Gastrocnemius medialis (tissue), 4 donors: ENCODE measurements at regions of chr9 and their contacts with region 1.

Region 1: DNA sequence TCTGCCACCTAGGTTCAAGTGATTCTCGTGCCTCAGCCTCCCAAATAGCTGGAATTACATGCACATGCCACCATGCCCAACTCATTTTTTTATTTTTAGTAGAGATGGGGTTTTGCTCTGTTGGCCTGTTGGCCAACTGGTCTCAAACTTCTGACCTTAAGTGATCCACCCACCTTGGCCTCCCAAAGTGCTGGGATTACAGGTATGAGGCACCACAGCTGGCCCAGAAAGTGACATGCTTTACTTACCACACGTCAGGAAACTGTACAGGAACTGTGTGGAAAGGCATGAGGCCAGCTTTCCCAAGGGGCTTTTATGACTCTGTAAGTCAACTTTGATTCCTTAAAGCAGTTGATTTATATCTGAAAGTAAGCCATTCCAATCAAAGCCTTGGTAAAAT is 25.0 kb downstream of the DNAJB5 start:
- DNase-seq: no peak
- ATAC-seq: no peak
- H3K4me3 ChIP-seq: no peak overlapping the region
- H3K27ac ChIP-seq: peak overlapping the region in 3 of 4 donors; percentile 1 to 19 (median 12)
- H3K4me1 ChIP-seq: peaks cover 0 to 4% of the 10 kb centered on the region in 2 donors
- H3K27me3 ChIP-seq: no peaks in the 10 kb centered on the region
- CTCF ChIP-seq: no peak
- POLR2A ChIP-seq: no peak

Region 2: DNA sequence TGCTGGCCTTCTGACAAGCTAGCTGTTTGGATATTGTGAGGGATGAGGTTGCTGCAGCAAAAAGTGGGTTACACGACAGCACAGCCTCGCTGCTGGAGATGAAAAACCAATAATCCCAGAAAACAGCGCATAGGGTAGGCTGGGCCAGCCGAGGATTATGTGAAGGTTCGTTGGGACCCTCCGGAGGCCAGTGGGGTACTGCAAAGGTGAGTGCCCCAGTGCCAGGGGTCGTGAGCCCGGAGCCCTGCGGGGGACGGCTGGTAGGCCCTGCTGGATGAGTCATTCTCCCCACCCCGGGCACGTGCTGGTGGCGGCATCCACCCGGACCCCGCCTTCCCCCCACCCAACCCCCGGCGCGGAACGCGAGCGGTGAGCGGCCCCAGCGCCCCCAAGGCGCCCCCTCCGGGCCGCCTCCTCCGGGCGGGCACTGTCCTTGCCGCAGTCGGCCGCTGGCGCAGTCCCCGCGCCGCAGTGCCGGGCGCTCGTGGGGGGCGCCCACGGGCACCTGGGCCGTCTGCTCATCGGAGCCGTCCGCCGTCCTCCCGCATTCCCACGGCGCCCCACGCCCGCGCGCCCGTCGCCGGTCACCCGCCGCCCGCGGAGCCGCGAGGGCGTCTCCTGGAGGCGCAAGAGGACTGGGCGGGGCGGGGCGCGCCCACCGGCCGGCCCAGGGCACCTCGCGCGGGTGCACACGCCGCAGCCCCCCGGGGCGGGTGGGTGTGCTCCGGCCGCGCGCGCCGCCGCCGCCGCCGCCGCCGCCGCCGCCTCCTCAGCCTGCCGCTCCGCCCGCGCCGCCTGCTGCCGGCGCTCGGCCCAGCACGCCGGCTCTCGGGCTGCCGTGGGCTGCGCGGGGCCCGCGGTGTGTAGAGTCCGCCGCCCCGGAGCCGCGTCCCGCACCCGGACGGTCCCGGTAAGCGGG is 56.8 kb before region 1 on chr9 and contains the start of gene PHF24:
- in situ Hi-C with region 1: loop called in 1 of 4 experiments (anchors 10 kb)
- intact Hi-C with region 1: no loop called
- DNase-seq: no peak
- ATAC-seq: peak in 1 of 2 donors; percentile 49
- H3K4me3 ChIP-seq: peak within 1 kb of the TSS; percentile 17 to 46 (median 33)
- H3K27ac ChIP-seq: no peak within 1 kb of the TSS
- H3K4me1 ChIP-seq: no peaks in the 10 kb centered on the region
- H3K27me3 ChIP-seq: peaks cover 26 to 41% (median 31%) of the 10 kb centered on the region in 3 donors
- CTCF ChIP-seq: no peak
- POLR2A ChIP-seq: no peak
- total RNA-seq, gene PHF24: 0.04 TPM in 1 of 4 donors, not detected in the others

Region 3: DNA sequence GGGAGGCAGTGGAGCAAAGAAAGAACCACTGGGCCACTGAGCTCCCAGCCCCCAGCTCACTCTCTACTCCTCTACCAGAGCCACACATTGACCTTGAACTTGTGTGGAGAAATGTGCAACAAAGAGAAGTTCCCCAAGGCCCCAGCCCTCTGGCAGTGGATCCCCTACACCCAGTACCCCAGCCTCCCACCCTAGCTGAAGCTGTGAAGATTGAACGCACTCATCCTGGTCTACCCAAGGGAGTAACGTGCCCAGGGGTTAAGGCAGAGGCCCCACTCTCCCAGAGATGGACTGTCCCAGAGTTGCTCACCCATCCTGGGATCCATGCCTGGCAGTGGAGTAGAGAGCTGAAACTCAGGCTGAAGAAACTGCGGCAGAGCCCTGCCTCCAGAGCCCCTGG is 30.1 kb after region 1 on chr9:
- in situ Hi-C with region 1: no loop called
- intact Hi-C with region 1: loop called (anchors 5 kb)
- DNase-seq: no peak
- ATAC-seq: no peak
- H3K4me3 ChIP-seq: no peak overlapping the region
- H3K27ac ChIP-seq: peak overlapping the region in 1 of 4 donors; percentile 28
- H3K4me1 ChIP-seq: no peaks in the 10 kb centered on the region
- H3K27me3 ChIP-seq: no peaks in the 10 kb centered on the region
- CTCF ChIP-seq: no peak
- POLR2A ChIP-seq: no peak

Region 4: GRCh38 chr9:35060548-35061207 is 46.2 kb after region 1 on chr9:
- in situ Hi-C with region 1: no loop called
- intact Hi-C with region 1: loop called (anchors 5 kb)
- DNase-seq: peak in 1 of 2 donors; percentile 34
- ATAC-seq: peak; percentile 81 to 84
- H3K4me3 ChIP-seq: no peak overlapping the region
- H3K27ac ChIP-seq: peak overlapping the region in 3 of 4 donors; percentile 44 to 67 (median 60)
- H3K4me1 ChIP-seq: no peaks in the 10 kb centered on the region
- H3K27me3 ChIP-seq: no peaks in the 10 kb centered on the region
- CTCF ChIP-seq: no peak
- POLR2A ChIP-seq: no peak